CD4-positive, alpha-beta T cell (primary cell): ENCODE measurements at regions of chr22 and their contacts with region 1.

Region 1: DNA sequence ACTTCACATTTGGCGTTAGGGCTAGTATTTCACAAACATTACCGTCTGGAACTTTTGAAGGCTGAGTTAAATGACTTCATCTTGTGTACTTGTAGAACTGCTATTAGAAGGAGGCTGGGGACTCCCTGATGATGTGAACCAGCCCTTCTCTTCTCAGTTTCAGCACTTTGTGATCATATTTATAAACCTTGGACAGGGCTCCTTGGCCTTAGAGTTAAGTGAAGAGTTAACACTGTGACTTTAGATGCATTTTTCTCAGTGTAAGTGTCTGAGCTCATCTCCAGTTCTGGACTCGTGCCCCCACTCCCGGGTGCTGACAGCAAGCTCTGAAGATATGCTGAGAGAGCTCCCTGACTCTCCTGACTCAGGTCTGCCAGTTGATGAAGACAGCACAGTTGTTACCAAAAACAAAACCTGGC is 8.4 kb downstream of the MIAT start:
- DNase-seq: no peak
- ATAC-seq: no peak
- H3K4me3 ChIP-seq: no peak overlapping the region
- H3K4me3 Mint-ChIP-seq: peak overlapping the region; percentile 25
- H3K27ac ChIP-seq: no peak overlapping the region
- H3K27ac Mint-ChIP-seq: peak overlapping the region; percentile 57
- H3K4me1 ChIP-seq: peaks cover 38% of the 10 kb centered on the region
- H3K4me1 Mint-ChIP-seq: peaks cover 29% of the 10 kb centered on the region
- H3K27me3 ChIP-seq: no peaks in the 10 kb centered on the region
- H3K27me3 Mint-ChIP-seq: peaks cover 4% of the 10 kb centered on the region
- CTCF ChIP-seq: peak; percentile 34

Region 2: GRCh38 chr22:26398741-26399153 is 267.1 kb before region 1 on chr22:
- CTCF ChIA-PET with region 1: no interaction called
- POLR2A ChIA-PET with region 1: no interaction called
- intact Hi-C with region 1: loop called in 1 of 2 experiments (anchors 1 kb)
- DNase-seq: peak; percentile 13 to 76 (median 34)
- ATAC-seq: peak; percentile 77
- H3K4me3 ChIP-seq: no peak overlapping the region
- H3K4me3 Mint-ChIP-seq: no peak overlapping the region
- H3K27ac ChIP-seq: no peak overlapping the region
- H3K27ac Mint-ChIP-seq: no peak overlapping the region
- H3K4me1 ChIP-seq: no peaks in the 10 kb centered on the region
- H3K4me1 Mint-ChIP-seq: no peaks in the 10 kb centered on the region
- H3K27me3 ChIP-seq: peaks cover 0 to 3% of the 10 kb centered on the region in 2 experiments
- H3K27me3 Mint-ChIP-seq: no peaks in the 10 kb centered on the region
- CTCF ChIP-seq: peak; percentile 68

Region 3: GRCh38 chr22:26502688-26503561 is 162.9 kb before region 1 on chr22:
- CTCF ChIA-PET with region 1: interaction called, 7 read pairs
- POLR2A ChIA-PET with region 1: no interaction called
- intact Hi-C with region 1: loop called in 1 of 2 experiments (anchors 1 kb)
- DNase-seq: peak; percentile 25 to 83 (median 40)
- ATAC-seq: peak; percentile 86
- H3K4me3 ChIP-seq: no peak overlapping the region
- H3K4me3 Mint-ChIP-seq: no peak overlapping the region
- H3K27ac ChIP-seq: peak overlapping the region in 1 of 2 donors; percentile 13
- H3K27ac Mint-ChIP-seq: peak overlapping the region; percentile 78
- H3K4me1 ChIP-seq: peaks cover 17% of the 10 kb centered on the region
- H3K4me1 Mint-ChIP-seq: peaks cover 21% of the 10 kb centered on the region
- H3K27me3 ChIP-seq: no peaks in the 10 kb centered on the region
- H3K27me3 Mint-ChIP-seq: no peaks in the 10 kb centered on the region
- CTCF ChIP-seq: peak; percentile 61

Region 4: DNA sequence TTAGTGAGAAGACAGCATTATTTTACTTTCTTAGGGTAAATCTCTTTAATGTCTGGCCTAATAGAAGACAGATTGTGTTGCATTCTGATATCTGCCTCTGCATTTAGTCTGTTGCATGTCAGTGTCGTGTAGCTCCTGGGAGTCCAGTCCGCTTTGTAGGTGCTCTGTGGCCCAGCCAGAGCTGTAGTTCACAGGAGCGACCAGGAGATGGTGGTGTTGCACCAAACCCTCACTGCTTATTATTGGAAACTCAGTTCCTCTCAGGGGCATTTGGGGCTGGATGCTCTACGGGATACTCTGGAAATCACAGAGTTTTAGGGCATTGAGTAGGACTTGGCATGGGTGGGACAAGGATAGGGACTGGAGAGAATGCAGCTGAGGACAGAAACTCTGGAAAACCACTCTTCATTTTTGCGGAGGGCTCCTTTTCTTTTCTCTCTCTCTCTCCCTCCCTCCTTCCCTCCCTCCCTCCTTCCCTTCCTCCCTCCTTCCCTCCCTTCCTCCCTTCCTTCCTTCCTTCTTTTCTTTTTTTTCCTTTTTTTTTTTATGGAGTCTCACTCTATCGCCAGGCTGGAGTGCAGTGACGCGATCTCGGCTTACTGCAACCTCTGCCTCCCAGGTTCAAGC is 13.3 kb after region 1 on chr22:
- CTCF ChIA-PET with region 1: interaction called, 14 read pairs
- POLR2A ChIA-PET with region 1: interaction called, 3 read pairs
- intact Hi-C with region 1: no loop called
- DNase-seq: peak; percentile 43 to 82 (median 64)
- ATAC-seq: peak; percentile 88
- H3K4me3 ChIP-seq: no peak overlapping the region
- H3K4me3 Mint-ChIP-seq: peak overlapping the region; percentile 86
- H3K27ac ChIP-seq: no peak overlapping the region
- H3K27ac Mint-ChIP-seq: peak overlapping the region; percentile 46
- H3K4me1 ChIP-seq: peaks cover 69% of the 10 kb centered on the region
- H3K4me1 Mint-ChIP-seq: peaks cover 75% of the 10 kb centered on the region
- H3K27me3 ChIP-seq: no peaks in the 10 kb centered on the region
- H3K27me3 Mint-ChIP-seq: no peaks in the 10 kb centered on the region
- CTCF ChIP-seq: peak; percentile 91

Region 5: GRCh38 chr22:27445881-27446280 is 780.1 kb after region 1 on chr22:
- CTCF ChIA-PET with region 1: no interaction called
- POLR2A ChIA-PET with region 1: no interaction called
- intact Hi-C with region 1: no loop called
- DNase-seq: no peak
- ATAC-seq: no peak
- H3K4me3 ChIP-seq: no peak overlapping the region
- H3K4me3 Mint-ChIP-seq: no peak overlapping the region
- H3K27ac ChIP-seq: no peak overlapping the region
- H3K27ac Mint-ChIP-seq: no peak overlapping the region
- H3K4me1 ChIP-seq: no peaks in the 10 kb centered on the region
- H3K4me1 Mint-ChIP-seq: no peaks in the 10 kb centered on the region
- H3K27me3 ChIP-seq: peaks cover 0 to 3% of the 10 kb centered on the region in 2 experiments
- H3K27me3 Mint-ChIP-seq: peaks cover under 1% of the 10 kb centered on the region
- CTCF ChIP-seq: no peak